Ascending aorta (tissue), 2 donors: ENCODE measurements at regions of chr3 and their contacts with region 1.

Region 1: DNA sequence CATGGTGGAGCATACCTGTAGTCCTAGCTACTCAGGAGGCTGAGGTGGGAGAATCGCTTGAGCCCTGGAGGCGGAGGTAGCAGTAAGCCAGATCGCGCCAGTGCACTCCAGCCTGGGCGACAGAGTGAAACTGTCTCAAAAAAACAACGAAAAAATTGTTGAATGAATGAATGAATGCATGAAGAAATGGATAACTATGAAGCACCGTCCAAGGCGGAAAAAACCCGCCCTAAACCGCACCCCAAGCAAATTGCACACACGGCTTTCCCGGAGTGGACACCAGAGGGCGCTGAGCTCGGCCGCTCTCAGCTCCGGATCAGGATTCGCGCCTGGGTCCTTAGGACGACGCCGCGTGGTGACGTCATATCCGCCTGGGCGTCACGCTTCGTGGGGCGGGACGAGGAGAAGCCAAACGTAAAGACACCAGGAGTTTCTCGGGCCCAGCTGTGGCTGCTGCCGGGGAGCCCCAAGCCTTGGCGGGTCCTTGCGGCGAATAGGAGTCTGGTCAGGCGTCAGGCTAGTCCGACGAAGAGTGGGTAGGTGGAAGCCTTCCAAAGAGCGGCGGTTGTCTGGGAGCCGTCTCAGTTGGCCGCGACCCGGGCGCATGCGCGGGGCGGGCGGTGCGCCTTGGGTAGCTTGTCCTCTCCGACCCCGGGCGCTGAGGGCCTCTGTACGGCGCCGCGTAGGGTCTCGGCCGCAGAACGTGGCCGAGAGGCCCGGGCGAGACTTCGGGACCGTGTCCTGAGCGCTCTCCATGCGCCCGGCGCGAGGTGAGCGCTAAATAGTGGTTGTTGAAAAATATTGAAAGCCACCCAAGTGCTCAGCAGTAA is at the starts of genes HTD2 and RPP14:
- DNase-seq: peak; percentile 90 to 99
- H3K4me3 ChIP-seq: peak within 1 kb of the TSS; percentile 77 to 86
- H3K27ac ChIP-seq: peak within 1 kb of the TSS; percentile 96 to 97
- H3K4me1 ChIP-seq: peaks cover 7 to 21% of the 10 kb centered on the region in 2 donors
- H3K27me3 ChIP-seq: no peaks in the 10 kb centered on the region
- CTCF ChIP-seq: peak; percentile 92 to 98 (median 94)
- total RNA-seq, gene HTD2: 0.53 TPM
- total RNA-seq, gene RPP14: 32.5 TPM

Region 2: GRCh38 chr3:57692259-57693147 is 613.6 kb before region 1 on chr3 and contains the start of gene DENND6A:
- intact Hi-C with region 1: loop called (anchors 10 kb)
- DNase-seq: peak; percentile 79 to 91
- H3K4me3 ChIP-seq: peak within 1 kb of the TSS; percentile 78 to 87
- H3K27ac ChIP-seq: peak within 1 kb of the TSS; percentile 97 to 98
- H3K4me1 ChIP-seq: peaks cover 7 to 30% of the 10 kb centered on the region in 2 donors
- H3K27me3 ChIP-seq: no peaks in the 10 kb centered on the region
- CTCF ChIP-seq: no peak
- total RNA-seq, gene DENND6A: 11.6 TPM

Region 3: GRCh38 chr3:57889807-57890206 is 416.3 kb before region 1 on chr3:
- intact Hi-C with region 1: loop called (anchors 10 kb)
- DNase-seq: peak in 1 of 2 donors; percentile 83
- H3K4me3 ChIP-seq: peak overlapping the region; percentile 48 to 65
- H3K27ac ChIP-seq: peak overlapping the region; percentile 85 to 87
- H3K4me1 ChIP-seq: peaks cover 8 to 14% of the 10 kb centered on the region in 2 donors
- H3K27me3 ChIP-seq: no peaks in the 10 kb centered on the region
- CTCF ChIP-seq: no peak

Region 4: GRCh38 chr3:57998366-57999283 is 307.5 kb before region 1 on chr3:
- intact Hi-C with region 1: no loop called
- DNase-seq: no peak
- H3K4me3 ChIP-seq: peak overlapping the region in 1 of 2 donors; percentile 45
- H3K27ac ChIP-seq: peak overlapping the region in 1 of 2 donors; percentile 30
- H3K4me1 ChIP-seq: peaks cover 0 to 4% of the 10 kb centered on the region in 2 donors
- H3K27me3 ChIP-seq: no peaks in the 10 kb centered on the region
- CTCF ChIP-seq: no peak

Region 5: GRCh38 chr3:58237238-58237940 is 68.7 kb before region 1 on chr3 and contains the start of gene ABHD6:
- intact Hi-C with region 1: loop called (anchors 1 kb)
- DNase-seq: peak; percentile 14 to 85
- H3K4me3 ChIP-seq: peak within 1 kb of the TSS; percentile 80 to 81
- H3K27ac ChIP-seq: peak within 1 kb of the TSS; percentile 60 to 69
- H3K4me1 ChIP-seq: peaks cover 0 to 2% of the 10 kb centered on the region in 2 donors
- H3K27me3 ChIP-seq: no peaks in the 10 kb centered on the region
- CTCF ChIP-seq: peak in 1 of 3 experiments; percentile 10
- total RNA-seq, gene ABHD6: 6.9 TPM

Region 6: DNA sequence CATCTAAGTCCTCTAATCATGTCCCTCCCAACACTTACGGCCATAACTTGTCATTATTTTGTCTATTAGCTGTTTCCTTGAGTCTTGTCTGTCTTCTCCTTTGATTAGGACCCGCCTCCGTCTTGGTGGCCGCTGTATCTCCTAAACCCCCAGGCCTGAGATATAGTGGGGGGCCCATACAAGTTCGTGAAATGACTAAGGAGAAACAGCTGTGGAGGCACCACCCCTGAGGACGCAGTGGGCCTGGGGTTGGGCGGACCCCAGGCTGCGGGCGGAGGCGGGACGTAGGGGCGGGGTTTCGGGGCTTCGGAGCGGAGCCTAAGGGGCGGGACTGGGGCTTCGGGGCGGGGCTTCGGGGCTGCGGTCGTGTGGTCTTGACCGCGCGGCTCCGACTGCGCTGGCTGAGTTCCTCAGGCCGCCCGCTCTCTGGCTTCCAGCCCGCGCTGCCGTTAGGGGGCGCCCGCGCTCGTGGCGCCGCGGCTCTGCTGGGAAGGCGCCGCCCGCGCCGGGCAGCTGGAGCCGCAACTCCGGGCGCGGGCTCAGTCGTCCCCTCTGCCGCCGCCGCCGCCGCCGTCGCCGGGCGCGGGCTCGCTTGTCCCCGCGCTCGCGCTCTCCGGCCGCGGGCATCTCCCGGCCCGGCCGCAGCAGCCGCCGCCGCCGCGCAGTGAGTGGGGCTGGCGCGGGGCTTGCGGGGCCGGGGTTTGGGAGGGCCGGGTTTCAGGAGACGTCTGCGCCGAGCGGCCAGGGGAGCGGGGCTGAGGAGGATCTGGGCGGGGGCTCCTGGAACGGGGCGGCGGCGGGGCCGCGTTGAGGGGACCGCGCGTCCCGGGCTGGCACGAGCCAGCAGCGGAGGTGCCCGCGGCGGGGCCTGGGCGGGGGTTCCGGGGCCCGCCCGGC is 185.7 kb after region 1 on chr3 and contains the start of gene KCTD6:
- intact Hi-C with region 1: loop called (anchors 1 kb)
- DNase-seq: peak; percentile 65 to 96
- H3K4me3 ChIP-seq: peak within 1 kb of the TSS; percentile 96 to 98
- H3K27ac ChIP-seq: peak within 1 kb of the TSS; percentile 81 to 92
- H3K4me1 ChIP-seq: peaks cover 5 to 37% of the 10 kb centered on the region in 2 donors
- H3K27me3 ChIP-seq: no peaks in the 10 kb centered on the region
- CTCF ChIP-seq: peak; percentile 58 to 86 (median 64)
- total RNA-seq, gene KCTD6: 6.6 TPM